ENCODE measurements at regions of chr11 and their contacts with region 1.

Region 1: DNA sequence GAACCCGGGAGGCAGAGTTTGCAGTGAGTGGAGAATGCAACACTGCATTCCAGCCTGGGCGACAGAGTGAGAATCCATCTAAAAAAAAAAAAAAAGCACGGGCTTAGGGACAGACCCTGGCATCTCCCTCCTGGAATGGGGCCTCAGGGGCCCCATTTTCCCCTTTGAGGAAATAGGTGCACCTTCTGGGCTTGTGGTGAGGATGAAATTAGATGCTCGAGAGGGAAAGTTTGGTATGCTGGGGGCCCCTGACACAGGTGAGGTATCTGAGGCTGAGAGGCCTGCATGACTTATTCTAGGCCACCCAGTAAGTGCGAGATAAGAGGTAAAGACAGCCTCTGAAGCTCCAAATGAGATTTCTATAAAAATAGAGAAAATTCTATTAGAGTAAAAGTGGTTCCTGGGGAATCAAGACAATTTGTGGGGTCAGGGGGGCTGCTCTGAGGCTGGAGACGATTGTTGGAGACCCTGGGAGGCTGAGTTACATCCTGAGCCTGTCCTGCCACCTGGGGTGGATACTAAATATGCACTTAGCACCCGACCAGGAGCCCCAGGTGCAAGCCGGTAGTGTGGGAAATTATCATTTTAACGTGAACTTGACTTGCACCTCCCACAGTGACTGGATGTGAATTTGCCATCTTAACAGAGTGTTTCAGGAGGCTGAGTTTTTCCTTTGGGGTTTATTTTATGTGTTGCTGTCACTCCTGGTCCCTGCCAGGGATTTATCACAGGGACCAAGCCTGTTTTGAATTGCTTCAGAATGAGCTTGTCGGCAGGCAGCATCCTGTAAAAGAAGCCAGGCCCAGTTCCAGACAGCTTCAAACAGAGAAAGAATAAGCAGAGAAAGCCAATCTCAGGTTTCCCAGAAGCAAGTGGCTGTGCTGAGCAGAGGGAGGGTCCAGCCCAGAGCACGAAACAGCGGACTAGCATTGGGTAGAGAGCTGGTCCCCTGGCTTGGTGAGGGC is 48.4 kb upstream of the TSKU start:
- DNase-seq: no peak
- ATAC-seq: no peak
- H3K4me3 ChIP-seq: no peak overlapping the region
- H3K27ac ChIP-seq: no peak overlapping the region
- H3K4me1 ChIP-seq: peaks cover 13% of the 10 kb centered on the region
- H3K27me3 ChIP-seq: no peaks in the 10 kb centered on the region
- CTCF ChIP-seq: no peak

Region 2: GRCh38 chr11:76799066-76799804 is 64.5 kb after region 1 on chr11:
- intact Hi-C with region 1: loop called (anchors 5 kb)
- DNase-seq: peak; percentile 91
- ATAC-seq: peak; percentile 91 to 94
- H3K4me3 ChIP-seq: peak overlapping the region; percentile 48
- H3K27ac ChIP-seq: peak overlapping the region; percentile 42
- H3K4me1 ChIP-seq: peaks cover 36% of the 10 kb centered on the region
- H3K27me3 ChIP-seq: no peaks in the 10 kb centered on the region
- CTCF ChIP-seq: peak; percentile 96

Region 3: GRCh38 chr11:76810151-76810853 is 75.6 kb after region 1 on chr11:
- intact Hi-C with region 1: no loop called
- DNase-seq: no peak
- ATAC-seq: peak; percentile 62 to 71
- H3K4me3 ChIP-seq: no peak overlapping the region
- H3K27ac ChIP-seq: peak overlapping the region; percentile 46
- H3K4me1 ChIP-seq: peaks cover 21% of the 10 kb centered on the region
- H3K27me3 ChIP-seq: no peaks in the 10 kb centered on the region
- CTCF ChIP-seq: peak; percentile 67